Activated T-helper 1 cell treated with anti-CD3 and anti-CD28 coated beads, Interleukin-12 subunit alpha, Interleukin-12 subunit beta, Interleukin-2, Interleukin-4 antibody, amounts not matched to agents 30 ng/mL and 10 ng/mL and 1 ng/mL, durations not matched to agents 14 hours and 24 hours and 36 hours (primary cell): ENCODE measurements at regions of chr1 and their contacts with region 1.

Region 1: GRCh38 chr1:41073971-41074370 is 52.4 kb upstream of the SLFNL1 start:
- DNase-seq: no peak
- H3K4me3 Mint-ChIP-seq: no peak overlapping the region
- H3K27ac Mint-ChIP-seq: no peak overlapping the region
- H3K4me1 Mint-ChIP-seq: no peaks in the 10 kb centered on the region
- H3K27me3 Mint-ChIP-seq: no peaks in the 10 kb centered on the region

Region 2: DNA sequence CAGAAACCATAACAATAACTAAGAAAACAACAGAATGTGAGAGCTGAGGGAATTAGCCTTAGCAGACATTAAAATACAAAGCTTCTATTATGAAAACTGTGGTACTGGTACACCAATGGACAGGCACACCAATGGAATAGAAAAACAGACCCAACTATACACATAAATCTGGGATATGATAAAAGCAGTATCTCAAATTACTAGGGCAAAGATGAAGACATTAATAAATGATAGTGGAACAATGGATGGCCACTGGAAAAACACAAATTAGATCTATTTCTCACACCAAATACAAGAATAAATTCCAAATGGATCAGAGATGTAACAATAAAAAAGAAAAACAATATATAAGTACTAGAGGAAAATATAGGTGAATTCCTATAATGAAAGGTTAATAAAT is 12.9 kb after region 1 on chr1:
- intact Hi-C with region 1: loop called (anchors 1 kb)
- DNase-seq: no peak
- H3K4me3 Mint-ChIP-seq: no peak overlapping the region
- H3K27ac Mint-ChIP-seq: no peak overlapping the region
- H3K4me1 Mint-ChIP-seq: no peaks in the 10 kb centered on the region
- H3K27me3 Mint-ChIP-seq: no peaks in the 10 kb centered on the region